Heart left ventricle (tissue), 16 donors: ENCODE measurements at regions of chr1 and their contacts with region 1.

Region 1: DNA sequence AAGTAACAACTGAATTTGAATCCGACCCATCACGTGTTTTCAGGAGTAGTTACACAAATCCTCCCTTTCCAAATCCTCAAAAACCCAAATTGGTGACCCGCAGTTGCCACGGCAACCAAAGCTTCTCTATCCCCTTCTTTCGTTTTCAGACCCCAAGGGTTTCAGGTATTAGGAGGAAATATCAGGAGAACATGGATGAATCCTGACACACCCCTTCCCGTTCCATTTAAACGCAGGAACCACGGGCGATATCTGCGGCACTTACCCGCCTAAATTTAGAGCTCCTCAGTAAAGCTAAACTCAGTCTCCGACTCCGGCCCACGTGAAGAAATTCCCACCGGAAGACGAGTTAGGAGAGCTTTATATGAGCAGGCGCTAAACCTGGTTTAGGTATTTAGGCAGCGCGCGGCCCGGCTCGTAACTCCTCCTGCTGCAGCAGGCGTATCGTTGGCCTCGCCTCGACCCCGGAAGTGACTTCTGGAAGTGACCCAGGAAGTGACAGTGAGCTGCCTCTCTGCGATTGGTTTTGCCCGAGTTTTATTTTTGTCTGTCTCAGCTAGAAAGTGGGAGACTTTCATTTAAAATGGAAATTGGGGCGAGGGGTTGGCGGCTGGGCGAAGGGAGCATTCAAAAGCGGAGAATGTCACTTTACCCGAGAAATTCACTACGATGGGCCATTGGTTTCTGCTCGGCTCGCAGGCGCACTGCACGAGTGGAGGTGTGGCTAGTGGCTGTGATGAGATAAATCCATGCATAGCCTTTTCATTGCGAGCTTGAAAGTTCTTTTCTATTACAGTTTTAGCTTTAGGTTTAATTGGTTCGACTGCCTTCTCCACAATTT is at the start of gene TAF1A:
- DNase-seq: peak; percentile 87 to 90 (median 88)
- ATAC-seq: peak; percentile 94 to 99 (median 99)
- H3K4me3 ChIP-seq: peak within 1 kb of the TSS; percentile 41 to 83 (median 66)
- H3K27ac ChIP-seq: peak within 1 kb of the TSS in 11 of 12 donors; percentile 58 to 85 (median 76)
- H3K4me1 ChIP-seq: peaks cover 0 to 24% (median 14%) of the 10 kb centered on the region in 12 donors
- H3K27me3 ChIP-seq: no peaks in the 10 kb centered on the region
- CTCF ChIP-seq: no peak
- POLR2A ChIP-seq: no peak
- total RNA-seq, gene TAF1A: 0.81 to 5.1 (median 1.6) TPM

Region 2: DNA sequence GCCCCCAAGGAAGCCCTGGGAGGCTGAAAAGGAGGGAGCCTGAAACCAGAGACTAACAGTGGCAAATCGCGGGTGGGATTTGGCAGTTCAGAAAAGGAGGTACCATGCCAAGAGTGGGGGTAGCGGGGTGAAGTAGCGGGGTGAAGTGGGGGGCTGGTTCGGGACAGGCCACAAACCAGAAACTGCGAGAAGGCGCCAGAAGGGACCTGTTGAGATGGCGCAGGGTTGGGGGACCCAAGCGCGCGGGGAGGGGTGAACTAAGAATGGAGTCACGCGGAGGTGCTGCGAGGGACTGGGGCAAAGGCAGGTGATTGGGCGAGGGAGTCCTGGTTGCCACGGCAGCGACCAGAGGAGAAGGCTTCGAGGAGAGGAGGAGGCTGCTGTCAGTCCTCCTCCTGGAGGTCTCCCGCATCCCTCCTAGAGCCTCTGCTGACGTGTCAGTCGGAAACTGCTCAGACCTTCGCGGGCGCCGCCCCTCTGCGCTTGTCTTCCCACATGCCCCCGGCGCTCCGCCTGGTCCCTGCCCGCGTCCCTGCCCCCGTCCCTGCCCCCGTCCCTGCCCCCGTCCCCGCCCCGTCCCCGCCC is 27.8 kb after region 1 on chr1:
- intact Hi-C with region 1: loop called in 2 of 10 experiments (anchors 1 to 2 kb)
- DNase-seq: peak; percentile 92 to 96 (median 94)
- ATAC-seq: peak; percentile 90 to 98 (median 94)
- H3K4me3 ChIP-seq: peak overlapping the region; percentile 32 to 98 (median 72)
- H3K27ac ChIP-seq: peak overlapping the region in 10 of 12 donors; percentile 18 to 81 (median 54)
- H3K4me1 ChIP-seq: peaks cover 0 to 16% (median 10%) of the 10 kb centered on the region in 12 donors
- H3K27me3 ChIP-seq: peaks cover 0 to 12% (median 0%) of the 10 kb centered on the region in 9 donors
- CTCF ChIP-seq: no peak
- POLR2A ChIP-seq: peak in 1 of 2 donors; percentile 35

Region 3: DNA sequence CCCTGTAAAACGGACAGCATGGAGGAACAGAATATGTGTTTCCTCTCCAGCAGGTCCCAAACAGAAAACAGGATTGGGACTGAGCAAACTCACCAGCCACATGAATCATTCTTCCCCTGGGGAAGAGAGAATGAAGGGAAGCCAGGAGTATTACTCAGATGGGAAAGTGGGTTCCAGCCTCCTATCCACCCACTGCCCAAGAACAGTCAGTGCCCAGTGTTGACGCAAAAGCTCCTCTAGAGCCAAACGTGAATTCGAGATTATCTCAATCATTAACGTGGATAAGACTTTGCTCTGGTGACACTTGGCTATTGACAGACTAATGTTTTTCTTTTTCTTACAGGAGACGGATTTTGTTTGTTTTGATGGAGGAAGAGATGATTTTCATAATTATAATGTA is 37.5 kb after region 1 on chr1:
- intact Hi-C with region 1: loop called in 2 of 10 experiments (anchors 5 kb)
- DNase-seq: peak in 1 of 5 donors; percentile 34
- ATAC-seq: peak in 3 of 4 donors; percentile 52 to 90 (median 75)
- H3K4me3 ChIP-seq: no peak overlapping the region
- H3K27ac ChIP-seq: peak overlapping the region in 1 of 12 donors; percentile 30
- H3K4me1 ChIP-seq: peaks cover 0 to 6% (median 0%) of the 10 kb centered on the region in 12 donors
- H3K27me3 ChIP-seq: no peaks in the 10 kb centered on the region
- CTCF ChIP-seq: no peak
- POLR2A ChIP-seq: no peak

Region 4: GRCh38 chr1:222634180-222635013 is 44.7 kb after region 1 on chr1:
- intact Hi-C with region 1: loop called in 2 of 10 experiments (anchors 5 kb)
- DNase-seq: peak in 2 of 5 donors; percentile 61 to 62
- ATAC-seq: peak; percentile 67 to 85 (median 74)
- H3K4me3 ChIP-seq: no peak overlapping the region
- H3K27ac ChIP-seq: no peak overlapping the region
- H3K4me1 ChIP-seq: no peaks in the 10 kb centered on the region
- H3K27me3 ChIP-seq: no peaks in the 10 kb centered on the region
- CTCF ChIP-seq: peak; percentile 80 to 92 (median 87)
- POLR2A ChIP-seq: no peak